BJ (cell line): ENCODE measurements at regions of chr20 and their contacts with region 1.

Region 1: GRCh38 chr20:4490606-4491280 is 231.0 kb upstream of the PRND start:
- DNase-seq: no peak
- H3K4me3 ChIP-seq: no peak overlapping the region
- H3K27me3 ChIP-seq: no peaks in the 10 kb centered on the region
- CTCF ChIP-seq: no peak

Region 2: DNA sequence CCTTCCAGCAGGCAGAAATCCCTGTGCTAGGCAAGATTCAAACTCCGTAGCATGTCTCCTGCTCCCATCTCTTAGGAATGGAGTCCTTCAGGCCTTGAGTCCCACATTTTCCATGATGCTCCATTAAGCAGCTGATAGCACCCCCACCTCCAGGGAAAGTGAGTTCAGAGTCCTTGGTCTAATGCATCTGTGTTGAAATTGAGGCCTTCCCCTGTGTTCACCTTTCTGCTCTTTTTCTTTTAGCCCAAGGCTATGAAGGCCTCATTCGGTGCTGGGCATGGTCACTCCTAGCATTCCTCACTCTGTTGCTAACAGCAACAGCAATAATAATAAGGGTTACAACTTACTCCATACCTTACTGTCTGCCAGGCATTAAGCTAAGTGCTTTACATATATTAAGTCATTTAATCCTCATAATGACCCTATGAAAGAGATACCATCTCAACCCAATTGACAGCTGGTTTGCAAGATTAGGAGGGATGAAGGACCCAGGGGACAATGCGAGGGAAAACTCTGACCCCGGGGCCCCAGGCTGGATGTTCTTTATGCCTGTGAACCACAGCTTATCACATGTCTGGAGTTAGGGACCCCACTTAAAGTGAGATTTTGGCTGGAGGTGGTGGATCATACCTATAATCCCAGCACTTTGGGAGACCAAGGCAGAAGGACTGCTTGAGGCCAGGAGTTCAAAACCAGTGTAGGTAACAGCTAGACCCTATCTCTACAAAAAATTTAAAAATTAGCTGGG is 619.0 kb before region 1 on chr20:
- CTCF ChIA-PET with region 1: no interaction called
- POLR2A ChIA-PET with region 1: no interaction called
- DNase-seq: no peak
- H3K4me3 ChIP-seq: no peak overlapping the region
- H3K27me3 ChIP-seq: no peaks in the 10 kb centered on the region
- CTCF ChIP-seq: no peak

Region 3: DNA sequence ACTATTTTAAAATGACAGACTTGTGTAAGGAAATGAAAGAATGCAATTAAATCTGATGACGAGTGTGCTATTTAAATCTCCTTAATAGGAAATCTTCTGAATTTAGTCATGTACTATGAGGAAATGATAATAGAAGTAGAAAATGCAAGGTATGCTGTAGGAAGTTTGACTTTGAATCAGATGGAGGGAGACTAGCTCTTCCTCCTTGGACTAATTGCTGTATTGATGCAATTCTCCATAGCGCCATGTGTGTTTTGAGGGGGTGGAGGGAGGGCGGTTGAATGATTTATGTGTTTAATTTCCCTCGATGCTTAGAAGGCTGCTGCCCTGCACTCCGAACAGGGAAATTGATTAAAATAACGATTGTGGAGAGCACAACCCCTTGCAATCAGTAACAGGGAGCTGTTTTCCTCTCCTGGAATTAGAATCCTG is 16.6 kb after region 1 on chr20:
- CTCF ChIA-PET with region 1: interaction called, 12 read pairs
- POLR2A ChIA-PET with region 1: interaction called, 3 read pairs
- DNase-seq: peak; percentile 96
- H3K4me3 ChIP-seq: no peak overlapping the region
- H3K27me3 ChIP-seq: no peaks in the 10 kb centered on the region
- CTCF ChIP-seq: no peak